ENCODE measurements at regions of chr11 and their contacts with region 1.

Region 1: DNA sequence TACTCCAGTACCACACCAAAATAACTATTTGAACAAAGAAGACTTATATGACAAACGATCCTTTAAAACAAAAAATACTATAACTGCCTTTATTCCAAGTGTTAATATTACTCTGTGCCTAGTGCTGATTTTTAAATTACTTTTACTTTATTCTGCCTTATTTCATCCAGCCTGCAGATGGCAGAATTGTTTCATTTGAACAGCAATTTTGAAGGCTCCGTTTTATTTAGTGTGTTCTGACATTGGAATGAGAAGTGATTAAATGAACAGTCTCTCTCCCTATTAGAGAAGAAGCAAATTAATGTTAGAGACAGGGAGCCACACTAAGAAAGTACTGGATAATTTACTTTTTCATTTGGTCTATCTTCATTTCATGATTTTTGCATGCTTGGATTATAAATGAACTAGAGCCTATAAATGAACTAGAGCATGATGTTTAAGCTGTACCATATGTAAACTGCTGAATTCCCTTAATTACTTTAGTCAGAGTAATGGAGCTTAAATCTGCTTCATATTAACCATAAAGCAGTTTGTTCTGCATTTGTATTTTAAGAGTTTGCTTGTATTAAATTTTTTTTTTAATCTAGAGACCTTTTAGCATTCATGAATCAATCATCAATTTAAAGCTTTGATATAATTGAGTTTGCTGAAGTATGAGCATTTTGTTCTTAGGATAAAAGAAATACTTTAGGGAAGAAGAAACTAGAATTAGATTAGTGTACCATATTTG is 9.8 kb downstream of the PDHX start:
- DNase-seq: no peak

Region 2: GRCh38 chr11:34899633-34900016 is 26.6 kb before region 1 on chr11:
- intact Hi-C with region 1: no loop called
- DNase-seq: no peak

Region 3: DNA sequence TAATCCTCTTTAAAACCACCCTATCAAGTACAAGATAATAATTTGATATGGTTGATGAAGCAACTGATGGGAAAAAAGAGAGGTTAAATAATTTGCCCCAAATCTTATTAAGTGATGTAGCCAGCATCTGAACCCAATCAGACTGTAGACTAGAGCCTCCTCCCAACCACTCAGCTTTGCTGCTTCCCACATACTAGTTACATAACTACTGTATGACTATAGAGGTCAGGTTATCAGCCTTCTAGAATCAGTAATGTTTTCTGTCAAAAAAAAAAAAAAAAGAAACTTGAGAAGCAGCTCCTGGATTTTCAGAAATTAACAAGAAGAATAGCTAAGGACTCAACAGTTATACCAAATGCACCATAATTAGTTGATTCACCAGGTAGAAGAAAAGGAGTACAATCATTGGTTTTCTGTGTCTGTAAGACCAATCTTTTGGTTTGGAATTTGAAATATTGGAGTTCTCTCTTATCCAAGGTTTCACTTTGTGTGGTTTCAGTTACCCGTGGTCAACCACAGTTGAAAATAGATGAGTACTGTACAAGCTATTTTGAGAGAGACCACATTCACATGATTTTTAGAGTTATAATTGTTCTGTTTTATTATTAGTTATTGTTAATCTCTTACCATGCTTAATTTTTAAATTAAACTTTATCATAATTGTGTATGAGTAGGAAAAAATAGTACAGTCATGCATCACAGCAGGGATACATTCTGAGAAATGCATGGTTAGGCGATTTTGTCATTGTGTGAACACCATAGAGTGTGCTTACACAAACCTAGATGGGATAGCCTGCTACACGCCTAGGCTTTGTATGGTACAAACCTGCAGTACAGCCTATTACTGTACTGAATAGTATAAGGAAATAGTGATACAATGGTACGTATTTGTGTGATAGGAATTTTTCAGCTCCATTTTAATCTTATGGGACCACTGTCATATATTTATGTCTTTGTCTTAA is 62.3 kb after region 1 on chr11:
- intact Hi-C with region 1: loop called in 1 of 2 experiments (anchors 10 kb)
- DNase-seq: no peak

Region 4: DNA sequence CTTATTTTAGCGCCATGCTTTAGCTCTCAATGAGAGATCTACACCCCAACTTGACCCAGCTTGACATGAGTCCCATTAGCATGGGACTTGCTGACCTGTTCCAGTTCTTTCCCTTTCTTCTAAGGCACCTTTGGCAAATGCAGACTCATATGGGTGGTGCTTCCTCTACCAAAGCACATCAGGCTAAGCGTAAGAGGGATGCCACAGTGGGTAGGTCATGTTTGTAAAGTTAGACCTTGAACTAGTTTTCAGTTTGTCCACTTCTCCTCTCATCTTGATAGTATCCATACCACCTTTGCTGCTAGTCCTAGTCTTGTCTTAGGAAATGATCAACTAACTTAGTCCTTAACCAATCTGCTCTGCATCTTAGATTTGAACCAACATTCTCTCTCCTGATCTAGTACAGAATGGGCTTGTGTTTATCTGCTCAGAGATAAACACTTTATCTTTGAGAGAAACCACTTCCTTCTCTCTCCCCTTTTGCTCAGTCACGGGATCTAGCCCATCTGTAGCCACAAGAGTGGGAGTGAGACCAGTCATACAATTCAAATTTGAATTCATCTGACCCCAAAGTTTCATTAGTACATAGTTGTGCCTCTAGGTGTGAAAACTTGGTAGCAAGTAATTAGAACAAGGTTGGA is 140.6 kb after region 1 on chr11:
- intact Hi-C with region 1: no loop called
- DNase-seq: no peak

Region 5: GRCh38 chr11:35391922-35392813 is 465.9 kb after region 1 on chr11:
- intact Hi-C with region 1: loop called (anchors 5 to 10 kb)
- DNase-seq: peak; percentile 95

Region 6: GRCh38 chr11:35485656-35486322 is 559.5 kb after region 1 on chr11:
- intact Hi-C with region 1: loop called in 1 of 2 experiments (anchors 5 kb)
- DNase-seq: peak; percentile 91